RWPE1 (cell line): ENCODE measurements at regions of chr1 and their contacts with region 1.

Region 1: GRCh38 chr1:23484253-23485001 is 448 bp upstream of the ASAP3 start:
- DNase-seq: peak; percentile 94
- H3K27ac ChIP-seq: peak overlapping the region; percentile 86
- CTCF ChIP-seq: no peak

Region 2: DNA sequence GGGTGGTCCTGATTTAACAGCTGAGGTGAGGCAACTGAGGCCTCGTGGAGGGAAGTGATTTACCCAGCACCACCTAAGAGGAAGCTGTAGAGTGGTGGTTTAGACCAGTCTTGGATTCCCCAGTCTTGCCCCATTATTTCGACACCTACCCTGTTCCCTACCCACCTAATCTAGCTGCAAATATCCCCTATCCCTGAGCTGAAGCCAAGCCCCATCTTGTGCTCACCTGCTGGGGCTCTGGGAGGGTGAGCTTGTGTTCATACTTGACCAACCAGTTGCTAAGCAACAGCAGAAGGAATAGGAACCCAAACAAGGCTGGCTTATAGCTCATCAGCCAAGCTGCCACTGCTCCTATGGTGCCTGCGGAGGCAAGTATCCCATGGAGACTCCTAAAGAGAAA is 470.8 kb before region 1 on chr1:
- CTCF ChIA-PET with region 1: no interaction called
- POLR2A ChIA-PET with region 1: interaction called, 11 read pairs
- DNase-seq: peak; percentile 42
- H3K27ac ChIP-seq: peak overlapping the region; percentile 51
- CTCF ChIP-seq: no peak